Activated CD8-positive, alpha-beta T cell treated with anti-CD3 and anti-CD28 coated beads, Interleukin-2, amount 10 ng/mL, durations not matched to agents 7 days and 5 days (primary cell): ENCODE measurements at regions of chr7 and their contacts with region 1.

Region 1: DNA sequence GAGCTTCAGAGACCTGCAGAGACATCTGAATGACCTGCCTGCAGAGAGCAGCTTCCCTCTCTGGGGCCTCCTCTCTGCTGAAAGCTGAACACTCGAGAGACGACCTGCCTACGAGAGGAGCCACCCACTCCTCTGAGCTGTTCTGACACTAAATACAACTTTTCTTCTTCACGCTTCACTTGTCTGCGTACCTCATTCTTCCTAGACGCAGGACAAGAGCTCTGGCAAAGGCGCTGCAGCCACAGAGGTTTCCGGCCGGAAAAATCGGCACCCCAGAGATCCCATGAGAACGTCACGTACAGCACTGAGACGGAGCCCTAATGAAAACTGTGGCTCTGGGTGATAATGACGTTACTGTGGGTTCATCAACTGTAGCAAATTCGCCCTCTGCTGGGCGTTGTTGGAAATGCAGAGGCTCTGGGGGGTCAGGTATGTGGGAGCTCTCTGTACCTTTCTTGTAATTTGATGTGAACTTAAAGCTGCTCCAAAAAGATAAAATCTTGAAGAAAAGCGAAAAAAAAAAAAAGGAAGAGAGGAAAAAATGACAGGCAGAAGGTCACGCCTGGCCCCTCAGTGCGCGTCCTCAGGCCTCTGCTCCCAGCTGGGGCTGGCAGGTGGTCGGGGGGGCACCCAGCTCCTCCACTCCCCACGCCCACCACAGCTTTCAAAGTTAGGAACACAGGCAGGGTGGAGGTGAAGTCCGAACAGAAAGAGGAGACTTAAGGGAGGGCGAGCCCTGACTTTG is 120.7 kb downstream of the DYNC2I1 start:
- DNase-seq: peak; percentile 93
- ATAC-seq: peak; percentile 88
- H3K4me3 Mint-ChIP-seq: peak overlapping the region; percentile 70
- H3K27ac Mint-ChIP-seq: peak overlapping the region; percentile 84
- H3K4me1 Mint-ChIP-seq: peaks cover 20% of the 10 kb centered on the region
- H3K27me3 Mint-ChIP-seq: no peaks in the 10 kb centered on the region

Region 2: GRCh38 chr7:158617737-158618128 is 359.3 kb before region 1 on chr7:
- CTCF ChIA-PET with region 1: no interaction called
- POLR2A ChIA-PET with region 1: no interaction called
- DNase-seq: no peak
- ATAC-seq: no peak
- H3K4me3 Mint-ChIP-seq: no peak overlapping the region
- H3K27ac Mint-ChIP-seq: no peak overlapping the region
- H3K4me1 Mint-ChIP-seq: no peaks in the 10 kb centered on the region
- H3K27me3 Mint-ChIP-seq: no peaks in the 10 kb centered on the region

Region 3: GRCh38 chr7:158695726-158696452 is 281.1 kb before region 1 on chr7:
- CTCF ChIA-PET with region 1: interaction called, 33 read pairs
- POLR2A ChIA-PET with region 1: interaction called, 7 read pairs
- DNase-seq: peak; percentile 42
- ATAC-seq: peak; percentile 56
- H3K4me3 Mint-ChIP-seq: no peak overlapping the region
- H3K27ac Mint-ChIP-seq: peak overlapping the region; percentile 48
- H3K4me1 Mint-ChIP-seq: peaks cover 53% of the 10 kb centered on the region
- H3K27me3 Mint-ChIP-seq: no peaks in the 10 kb centered on the region

Region 4: GRCh38 chr7:158863611-158864506 is 113.2 kb before region 1 on chr7:
- CTCF ChIA-PET with region 1: interaction called, 13 read pairs
- POLR2A ChIA-PET with region 1: interaction called, 4 read pairs
- DNase-seq: peak; percentile 72
- ATAC-seq: peak; percentile 63
- H3K4me3 Mint-ChIP-seq: peak overlapping the region; percentile 78
- H3K27ac Mint-ChIP-seq: peak overlapping the region; percentile 91
- H3K4me1 Mint-ChIP-seq: peaks cover 62% of the 10 kb centered on the region
- H3K27me3 Mint-ChIP-seq: no peaks in the 10 kb centered on the region

Region 5: GRCh38 chr7:158902427-158902826 is 74.6 kb before region 1 on chr7:
- CTCF ChIA-PET with region 1: interaction called, 10 read pairs
- POLR2A ChIA-PET with region 1: no interaction called
- DNase-seq: no peak
- ATAC-seq: no peak
- H3K4me3 Mint-ChIP-seq: no peak overlapping the region
- H3K27ac Mint-ChIP-seq: no peak overlapping the region
- H3K4me1 Mint-ChIP-seq: peaks cover 10% of the 10 kb centered on the region
- H3K27me3 Mint-ChIP-seq: no peaks in the 10 kb centered on the region

Region 6: DNA sequence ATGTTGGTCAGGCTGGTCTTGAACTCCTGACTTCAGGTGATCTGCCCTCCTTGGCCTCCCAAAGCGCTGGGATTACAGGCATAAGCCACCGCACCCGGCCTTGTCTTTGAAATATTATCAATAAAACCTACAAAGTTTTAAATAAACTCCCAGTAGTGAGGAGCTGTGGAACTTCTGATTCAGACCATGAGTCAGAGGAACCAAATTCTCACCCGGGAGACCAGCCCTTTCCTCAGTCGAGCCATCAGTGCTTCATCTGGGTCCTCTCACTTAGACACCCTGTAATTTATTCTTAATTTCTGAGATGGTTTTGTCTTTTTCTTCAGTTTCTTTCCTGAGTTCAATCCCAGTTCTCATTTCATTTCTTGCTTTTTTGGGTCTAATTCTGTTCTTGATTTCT is 52.1 kb before region 1 on chr7:
- CTCF ChIA-PET with region 1: no interaction called
- POLR2A ChIA-PET with region 1: no interaction called
- DNase-seq: no peak
- ATAC-seq: no peak
- H3K4me3 Mint-ChIP-seq: no peak overlapping the region
- H3K27ac Mint-ChIP-seq: no peak overlapping the region
- H3K4me1 Mint-ChIP-seq: no peaks in the 10 kb centered on the region
- H3K27me3 Mint-ChIP-seq: no peaks in the 10 kb centered on the region

Region 7: DNA sequence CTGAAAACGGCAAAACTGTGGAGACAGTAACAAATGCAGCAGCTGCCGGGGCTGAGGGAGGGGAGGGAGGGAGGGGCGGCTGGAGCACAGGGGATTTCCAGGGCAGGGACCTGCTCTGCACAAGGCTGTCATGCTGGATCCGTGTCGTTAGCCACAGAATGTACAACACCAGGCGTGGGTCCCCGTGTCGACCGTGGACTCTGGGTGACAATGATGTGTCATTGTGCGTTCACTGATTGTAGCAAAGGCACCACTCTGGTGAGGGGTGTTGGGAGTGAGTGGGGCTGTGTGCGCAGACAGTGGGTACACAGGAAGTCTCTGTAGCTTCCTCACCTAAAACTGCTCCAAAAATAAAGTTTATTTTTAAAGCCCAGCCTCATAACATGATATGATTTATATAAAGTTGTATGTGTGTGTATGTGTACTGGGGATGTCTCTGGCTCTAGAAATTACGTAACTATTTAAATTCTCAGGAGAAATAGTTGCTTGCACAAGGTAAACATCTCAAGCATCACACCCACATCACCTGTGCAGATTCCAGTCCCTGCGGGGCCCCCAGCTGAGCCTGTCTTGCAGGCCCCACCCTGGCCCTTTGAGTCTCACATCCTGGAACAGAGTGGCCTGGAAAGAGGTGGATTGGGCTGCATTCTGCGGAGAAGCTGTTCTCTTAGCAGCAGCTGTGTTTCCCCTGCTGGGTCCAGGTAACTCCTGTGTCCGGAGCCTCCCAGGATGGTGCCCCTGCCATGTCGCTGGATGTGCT is 15.0 kb after region 1 on chr7:
- CTCF ChIA-PET with region 1: interaction called, 16 read pairs
- POLR2A ChIA-PET with region 1: no interaction called
- DNase-seq: no peak
- ATAC-seq: no peak
- H3K4me3 Mint-ChIP-seq: no peak overlapping the region
- H3K27ac Mint-ChIP-seq: no peak overlapping the region
- H3K4me1 Mint-ChIP-seq: no peaks in the 10 kb centered on the region
- H3K27me3 Mint-ChIP-seq: peaks cover 27% of the 10 kb centered on the region

Region 8: GRCh38 chr7:159036916-159037605 is 60.0 kb after region 1 on chr7:
- CTCF ChIA-PET with region 1: no interaction called
- POLR2A ChIA-PET with region 1: no interaction called
- DNase-seq: no peak
- ATAC-seq: no peak
- H3K4me3 Mint-ChIP-seq: no peak overlapping the region
- H3K27ac Mint-ChIP-seq: no peak overlapping the region
- H3K4me1 Mint-ChIP-seq: no peaks in the 10 kb centered on the region
- H3K27me3 Mint-ChIP-seq: no peaks in the 10 kb centered on the region